RWPE1 (cell line): ENCODE measurements at regions of chr11 and their contacts with region 1.

Region 1: GRCh38 chr11:36746886-36747710 is 149.1 kb upstream of the RAG2 start:
- DNase-seq: peak; percentile 79
- H3K27ac ChIP-seq: no peak overlapping the region
- CTCF ChIP-seq: peak; percentile 99

Region 2: GRCh38 chr11:36564376-36565030 is 182.6 kb before region 1 on chr11:
- CTCF ChIA-PET with region 1: interaction called, 25 read pairs
- POLR2A ChIA-PET with region 1: no interaction called
- DNase-seq: peak; percentile 30
- H3K27ac ChIP-seq: no peak overlapping the region
- CTCF ChIP-seq: peak; percentile 61

Region 3: GRCh38 chr11:36702330-36703055 is 44.6 kb before region 1 on chr11:
- CTCF ChIA-PET with region 1: interaction called, 47 read pairs
- POLR2A ChIA-PET with region 1: no interaction called
- DNase-seq: peak; percentile 78
- H3K27ac ChIP-seq: no peak overlapping the region
- CTCF ChIP-seq: peak; percentile 86

Region 4: GRCh38 chr11:36792996-36793914 is 46.2 kb after region 1 on chr11:
- CTCF ChIA-PET with region 1: no interaction called
- POLR2A ChIA-PET with region 1: no interaction called
- DNase-seq: no peak
- H3K27ac ChIP-seq: no peak overlapping the region
- CTCF ChIP-seq: no peak